GM10248 (cell line): ENCODE measurements at regions of chr6 and their contacts with region 1.

Region 1: DNA sequence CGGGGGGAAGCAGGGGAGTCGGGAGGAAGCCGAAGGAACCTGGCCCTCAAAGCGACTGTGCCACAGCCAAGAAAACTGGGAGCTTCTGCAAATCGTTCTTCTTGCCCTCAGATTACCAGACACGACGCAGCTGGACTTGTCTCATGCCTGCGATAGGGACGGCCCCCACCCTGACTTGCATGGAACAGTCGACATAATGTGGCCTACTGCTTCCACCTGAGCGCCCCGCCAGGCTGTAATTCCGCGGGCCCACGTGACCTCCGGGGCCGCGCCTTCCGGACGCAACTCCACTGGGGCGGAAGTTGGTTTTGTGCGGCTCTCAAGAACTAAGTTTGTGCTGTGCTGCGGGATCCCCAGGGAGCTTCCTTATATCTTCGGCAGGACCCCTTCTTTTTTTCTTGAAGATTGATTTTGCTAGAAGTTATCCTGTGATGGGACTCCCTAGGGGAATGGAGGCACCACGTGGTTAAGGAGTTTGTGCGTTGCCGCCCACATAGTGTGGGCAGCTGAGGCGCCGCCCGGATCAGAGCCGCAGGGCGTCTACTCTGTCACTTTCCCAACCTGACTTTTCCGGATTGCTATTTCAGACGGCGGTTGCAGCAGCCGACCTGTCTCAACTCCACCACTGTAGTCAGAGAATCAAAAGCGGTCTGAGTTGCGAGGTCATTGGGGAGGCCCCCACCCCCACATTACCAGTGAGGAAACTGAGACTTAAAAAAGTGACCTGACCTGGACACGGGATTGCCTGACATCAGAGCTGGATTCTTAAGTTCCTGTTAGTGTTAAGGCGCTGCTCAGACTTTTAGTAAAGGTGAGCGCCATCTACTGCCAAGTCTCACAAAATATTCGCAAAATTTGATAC is 540 bp upstream of the CD164 start:
- DNase-seq: peak; percentile 90
- CTCF ChIP-seq: peak; percentile 50

Region 2: GRCh38 chr6:108927927-108928326 is 454.9 kb before region 1 on chr6:
- CTCF ChIA-PET with region 1: no interaction called
- POLR2A ChIA-PET with region 1: no interaction called
- DNase-seq: no peak
- CTCF ChIP-seq: no peak

Region 3: GRCh38 chr6:109095027-109095834 is 287.6 kb before region 1 on chr6 and contains the start of gene CEP57L1:
- CTCF ChIA-PET with region 1: interaction called, 20 read pairs
- POLR2A ChIA-PET with region 1: no interaction called
- DNase-seq: peak; percentile 85
- CTCF ChIP-seq: peak; percentile 20

Region 4: GRCh38 chr6:109187399-109188114 is 195.2 kb before region 1 on chr6:
- CTCF ChIA-PET with region 1: interaction called, 111 read pairs
- POLR2A ChIA-PET with region 1: no interaction called
- DNase-seq: peak; percentile 43
- CTCF ChIP-seq: peak; percentile 85

Region 5: GRCh38 chr6:109362102-109362884 is 20.5 kb before region 1 on chr6:
- CTCF ChIA-PET with region 1: interaction called, 23 read pairs
- POLR2A ChIA-PET with region 1: no interaction called
- DNase-seq: no peak
- CTCF ChIP-seq: no peak

Region 6: GRCh38 chr6:109397020-109397419 is 14.2 kb after region 1 on chr6:
- CTCF ChIA-PET with region 1: interaction called, 41 read pairs
- POLR2A ChIA-PET with region 1: interaction called, 4 read pairs
- DNase-seq: no peak
- CTCF ChIP-seq: no peak

Region 7: DNA sequence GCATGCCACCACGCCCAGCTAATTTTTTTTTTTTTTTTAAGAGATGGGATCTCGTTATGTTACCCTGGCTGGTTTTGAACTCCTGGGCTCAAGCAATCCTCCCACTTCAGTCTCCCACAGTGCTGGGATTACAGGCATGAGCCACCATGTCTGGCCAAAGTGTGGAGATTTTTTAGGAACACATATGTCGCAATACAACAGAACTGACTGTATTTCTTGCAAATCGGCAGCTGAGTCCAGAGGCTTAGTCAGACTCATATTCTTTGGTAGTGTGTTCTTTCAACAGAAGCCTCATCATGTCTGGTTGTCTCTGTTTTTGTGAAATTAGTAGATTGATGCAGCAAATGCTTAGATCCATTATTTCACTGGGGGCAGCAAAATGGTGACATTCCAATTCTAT is 23.4 kb after region 1 on chr6:
- CTCF ChIA-PET with region 1: interaction called, 11 read pairs
- POLR2A ChIA-PET with region 1: no interaction called
- DNase-seq: no peak
- CTCF ChIP-seq: no peak

Region 8: GRCh38 chr6:109440331-109441068 is 57.7 kb after region 1 on chr6 and contains the starts of genes PPIL6 and SMPD2:
- CTCF ChIA-PET with region 1: interaction called, 20 read pairs
- POLR2A ChIA-PET with region 1: interaction called, 3 read pairs
- DNase-seq: peak; percentile 95
- CTCF ChIP-seq: peak; percentile 15

Region 9: GRCh38 chr6:110853754-110854477 is 1471.1 kb after region 1 on chr6:
- CTCF ChIA-PET with region 1: no interaction called
- POLR2A ChIA-PET with region 1: no interaction called
- DNase-seq: no peak
- CTCF ChIP-seq: no peak